ENCODE measurements at regions of chr14 and their contacts with region 1.

Region 1: DNA sequence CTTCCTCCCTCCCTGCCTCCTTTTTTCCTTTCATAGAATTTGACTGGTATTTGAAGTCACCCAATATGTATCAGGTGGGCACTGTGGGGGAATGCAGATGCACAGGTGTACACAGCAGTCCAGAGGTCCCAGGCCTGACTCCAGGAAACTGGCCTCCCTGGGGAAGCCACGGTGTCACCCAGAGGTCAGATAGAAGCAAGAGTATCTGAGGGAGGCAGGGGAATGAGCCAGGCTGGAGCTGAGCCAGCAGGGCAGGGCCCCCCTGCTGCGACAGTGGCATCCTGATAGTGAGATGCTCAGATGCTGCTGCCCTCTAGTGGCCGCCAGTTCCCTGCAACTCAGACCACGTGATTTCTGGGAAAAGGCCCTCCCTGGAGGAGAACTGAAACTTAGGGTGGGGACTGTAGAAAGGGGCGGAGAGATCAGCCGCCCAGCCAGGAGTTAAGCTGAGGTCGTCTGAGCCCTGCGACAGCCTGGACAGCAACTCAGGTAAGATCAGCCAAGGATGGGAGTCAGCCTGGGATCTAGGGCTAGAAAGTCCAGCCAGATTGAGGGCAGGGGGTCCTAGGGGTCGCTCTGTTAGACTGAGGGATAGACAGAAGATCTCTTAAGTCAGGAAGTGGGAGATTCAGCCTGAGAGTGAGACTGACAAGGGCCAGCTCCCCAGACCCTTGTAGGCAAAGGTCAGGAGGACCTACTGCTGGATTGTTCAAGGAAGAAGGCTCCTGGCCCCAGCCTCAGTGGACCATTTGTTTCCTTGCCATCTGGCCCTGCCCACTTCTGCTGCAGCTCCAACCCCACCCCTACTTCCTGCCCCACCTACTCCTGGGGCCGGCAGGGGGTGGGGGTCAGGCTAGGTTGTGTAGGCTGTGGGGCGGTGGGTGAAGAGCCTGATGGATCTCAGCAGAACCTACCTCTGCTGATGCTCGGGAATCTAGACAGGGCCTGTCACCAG is at the start of gene IRF9:
- DNase-seq: peak; percentile 90
- ATAC-seq: peak; percentile 92
- H3K4me3 Mint-ChIP-seq: peak within 1 kb of the TSS; percentile 98
- H3K27ac Mint-ChIP-seq: peak within 1 kb of the TSS; percentile 95
- H3K4me1 Mint-ChIP-seq: peaks cover 45% of the 10 kb centered on the region
- H3K27me3 Mint-ChIP-seq: no peaks in the 10 kb centered on the region
- CTCF ChIP-seq: no peak
- total RNA-seq, gene IRF9: 221 and 229 TPM in 2 replicates

Region 2: GRCh38 chr14:24013654-24014514 is 147.2 kb before region 1 on chr14:
- CTCF ChIA-PET with region 1: interaction called, 3 read pairs
- POLR2A ChIA-PET with region 1: no interaction called
- intact Hi-C with region 1: loop called (anchors 1 kb)
- DNase-seq: no peak
- ATAC-seq: peak; percentile 97
- H3K4me3 Mint-ChIP-seq: no peak overlapping the region
- H3K27ac Mint-ChIP-seq: no peak overlapping the region
- H3K4me1 Mint-ChIP-seq: peaks cover 20% of the 10 kb centered on the region
- H3K27me3 Mint-ChIP-seq: no peaks in the 10 kb centered on the region
- CTCF ChIP-seq: peak; percentile 48

Region 3: GRCh38 chr14:24093901-24094761 is 67.0 kb before region 1 on chr14 and contains the start of gene PCK2:
- CTCF ChIA-PET with region 1: interaction called, 14 read pairs
- POLR2A ChIA-PET with region 1: interaction called, 53 read pairs
- intact Hi-C with region 1: loop called (anchors 1 kb)
- DNase-seq: peak; percentile 76
- ATAC-seq: peak; percentile 69
- H3K4me3 Mint-ChIP-seq: peak within 1 kb of the TSS; percentile 99
- H3K27ac Mint-ChIP-seq: peak within 1 kb of the TSS; percentile 99
- H3K4me1 Mint-ChIP-seq: peaks cover 31% of the 10 kb centered on the region
- H3K27me3 Mint-ChIP-seq: no peaks in the 10 kb centered on the region
- CTCF ChIP-seq: no peak
- total RNA-seq, gene PCK2: 82.1 and 102 TPM in 2 replicates

Region 4: DNA sequence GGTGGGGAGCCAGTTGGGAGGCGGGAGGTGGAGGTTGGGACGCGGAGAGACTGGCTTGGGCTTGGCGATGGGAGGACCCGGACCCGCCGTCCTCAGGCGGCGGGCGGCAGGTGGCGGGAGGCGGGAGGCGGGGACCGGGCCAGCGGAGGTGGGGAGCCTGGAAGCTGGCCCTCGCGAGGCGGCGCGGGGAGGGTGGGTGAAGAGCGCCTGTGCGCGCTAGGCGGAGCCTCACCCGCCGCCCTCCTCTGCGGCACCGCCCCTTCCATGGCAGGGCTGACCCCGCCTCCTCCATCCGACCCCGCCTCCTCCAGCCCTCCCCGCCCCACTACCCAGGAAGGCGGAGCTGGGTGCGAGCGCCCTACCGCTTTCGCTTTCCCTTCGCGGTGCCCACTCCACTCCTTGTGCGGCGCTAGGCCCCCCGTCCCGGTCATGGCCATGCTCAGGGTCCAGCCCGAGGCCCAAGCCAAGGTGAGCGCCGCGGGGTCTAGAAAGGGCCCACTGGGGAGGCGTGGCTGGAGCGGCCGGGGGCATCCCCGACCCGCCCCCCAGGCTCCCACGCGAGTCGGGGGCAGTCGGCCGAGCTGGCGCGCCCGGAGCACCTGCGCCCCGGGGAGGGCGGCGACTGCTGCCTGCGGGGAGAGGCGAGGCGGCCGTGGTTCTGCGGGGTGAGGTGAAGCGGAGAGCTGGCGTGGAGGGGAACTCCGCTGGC is 25.1 kb before region 1 on chr14 and contains the start of gene PSME1:
- CTCF ChIA-PET with region 1: interaction called, 10 read pairs
- POLR2A ChIA-PET with region 1: interaction called, 44 read pairs
- intact Hi-C with region 1: loop called (anchors 1 kb)
- DNase-seq: peak; percentile 94
- ATAC-seq: peak; percentile 97
- H3K4me3 Mint-ChIP-seq: peak within 1 kb of the TSS; percentile 91
- H3K27ac Mint-ChIP-seq: peak within 1 kb of the TSS; percentile 90
- H3K4me1 Mint-ChIP-seq: peaks cover 57% of the 10 kb centered on the region
- H3K27me3 Mint-ChIP-seq: no peaks in the 10 kb centered on the region
- CTCF ChIP-seq: no peak
- total RNA-seq, gene PSME1: 406 and 449 TPM in 2 replicates

Region 5: GRCh38 chr14:24171422-24172260 is 10.5 kb after region 1 on chr14 and contains the start of gene REC8:
- CTCF ChIA-PET with region 1: interaction called, 5 read pairs
- POLR2A ChIA-PET with region 1: interaction called, 43 read pairs
- intact Hi-C with region 1: loop called (anchors 1 kb)
- DNase-seq: peak; percentile 68
- ATAC-seq: peak; percentile 91
- H3K4me3 Mint-ChIP-seq: peak within 1 kb of the TSS; percentile 90
- H3K27ac Mint-ChIP-seq: peak within 1 kb of the TSS; percentile 84
- H3K4me1 Mint-ChIP-seq: peaks cover 25% of the 10 kb centered on the region
- H3K27me3 Mint-ChIP-seq: no peaks in the 10 kb centered on the region
- CTCF ChIP-seq: no peak
- total RNA-seq, gene REC8: 27.0 and 35.3 TPM in 2 replicates

Region 6: DNA sequence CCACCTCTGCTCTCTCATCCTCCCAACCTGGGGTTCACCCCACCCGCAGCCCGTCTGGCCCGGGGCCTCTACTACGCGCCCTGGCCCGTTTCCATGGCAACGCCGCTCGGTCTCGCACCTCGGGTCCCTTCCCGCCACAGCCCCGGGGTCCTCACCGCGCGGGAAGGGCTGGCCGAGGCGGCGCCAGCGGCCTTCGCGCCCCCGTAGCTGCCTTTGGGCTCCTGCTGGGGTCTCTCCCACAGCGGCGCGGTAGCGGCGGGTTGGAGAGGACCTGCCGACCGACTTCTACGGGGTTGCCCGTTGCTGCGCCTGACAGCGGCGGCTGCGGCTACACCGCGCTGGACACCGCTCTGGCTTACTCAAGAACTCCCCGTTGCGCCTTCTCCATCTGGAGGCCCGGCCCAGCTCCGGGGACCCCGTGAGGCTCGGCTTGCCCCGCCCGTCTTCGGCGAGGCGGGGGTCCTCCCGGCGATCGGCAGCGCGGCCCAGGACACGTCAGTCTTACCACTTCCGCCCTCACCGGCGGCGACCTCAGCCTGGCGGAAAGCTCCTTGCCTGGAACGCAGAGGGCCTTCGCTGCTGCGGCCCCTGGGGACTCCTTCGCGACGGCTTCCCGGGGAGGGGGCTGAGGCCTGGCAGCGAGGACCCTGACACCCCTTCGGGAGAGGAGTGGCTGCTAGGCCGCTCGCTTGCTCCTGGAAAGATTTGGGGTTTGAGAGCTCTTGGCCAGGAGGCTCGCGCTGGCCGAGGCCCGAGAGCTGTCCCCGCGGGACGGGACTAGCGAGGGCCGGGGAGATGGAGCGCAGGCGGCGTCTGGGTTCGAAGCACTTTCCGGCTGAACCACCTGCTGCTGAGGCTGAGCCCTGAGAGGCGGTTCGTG is 34.3 kb after region 1 on chr14 and contains the start of gene TM9SF1:
- CTCF ChIA-PET with region 1: interaction called, 7 read pairs
- POLR2A ChIA-PET with region 1: interaction called, 22 read pairs
- intact Hi-C with region 1: loop called (anchors 1 kb)
- DNase-seq: peak; percentile 91
- ATAC-seq: peak; percentile 83
- H3K4me3 Mint-ChIP-seq: peak within 1 kb of the TSS; percentile 96
- H3K27ac Mint-ChIP-seq: peak within 1 kb of the TSS; percentile 97
- H3K4me1 Mint-ChIP-seq: peaks cover 48% of the 10 kb centered on the region
- H3K27me3 Mint-ChIP-seq: no peaks in the 10 kb centered on the region
- CTCF ChIP-seq: no peak
- total RNA-seq, gene TM9SF1: 24.5 and 26.3 TPM in 2 replicates

Region 7: GRCh38 chr14:24299255-24300195 is 138.4 kb after region 1 on chr14 and contains the starts of genes DHRS1 and NOP9:
- CTCF ChIA-PET with region 1: interaction called, 6 read pairs
- POLR2A ChIA-PET with region 1: interaction called, 17 read pairs
- intact Hi-C with region 1: loop called (anchors 1 kb)
- DNase-seq: peak; percentile 93
- ATAC-seq: peak; percentile 78
- H3K4me3 Mint-ChIP-seq: peak within 1 kb of the TSS; percentile 95
- H3K27ac Mint-ChIP-seq: peak within 1 kb of the TSS; percentile 94
- H3K4me1 Mint-ChIP-seq: peaks cover 51% of the 10 kb centered on the region
- H3K27me3 Mint-ChIP-seq: no peaks in the 10 kb centered on the region
- CTCF ChIP-seq: no peak
- total RNA-seq, gene DHRS1: 32.5 and 33.9 TPM in 2 replicates
- total RNA-seq, gene NOP9: 30.5 and 36.4 TPM in 2 replicates